Caco-2 (cell line): ENCODE measurements at regions of chr6 and their contacts with region 1.

Region 1: DNA sequence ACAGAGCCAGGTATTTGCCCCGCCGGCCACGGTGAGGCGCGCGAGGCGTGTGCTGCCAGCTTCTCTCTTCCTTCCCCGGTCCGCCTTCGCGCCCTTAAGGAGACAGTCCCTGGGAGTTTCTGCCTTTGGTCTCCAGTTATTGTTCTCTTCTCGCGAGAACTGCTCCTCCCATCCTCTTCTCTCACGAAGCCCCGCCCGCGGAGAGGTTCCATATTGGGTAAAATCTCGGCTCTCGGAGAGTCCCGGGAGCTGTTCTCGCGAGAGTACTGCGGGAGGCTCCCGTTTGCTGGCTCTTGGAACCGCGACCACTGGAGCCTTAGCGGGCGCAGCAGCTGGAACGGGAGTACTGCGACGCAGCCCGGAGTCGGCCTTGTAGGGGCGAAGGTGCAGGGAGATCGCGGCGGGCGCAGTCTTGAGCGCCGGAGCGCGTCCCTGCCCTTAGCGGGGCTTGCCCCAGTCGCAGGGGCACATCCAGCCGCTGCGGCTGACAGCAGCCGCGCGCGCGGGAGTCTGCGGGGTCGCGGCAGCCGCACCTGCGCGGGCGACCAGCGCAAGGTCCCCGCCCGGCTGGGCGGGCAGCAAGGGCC is at the start of gene MAPK14:
- DNase-seq: peak; percentile 99
- H3K4me3 ChIP-seq: peak within 1 kb of the TSS; percentile 78
- H3K4me3 Mint-ChIP-seq: peak within 1 kb of the TSS; percentile 83
- H3K27ac Mint-ChIP-seq: peak within 1 kb of the TSS; percentile 80
- H3K4me1 ChIP-seq: peaks cover 34% of the 10 kb centered on the region
- H3K4me1 Mint-ChIP-seq: peaks cover 18% of the 10 kb centered on the region
- H3K27me3 ChIP-seq: no peaks in the 10 kb centered on the region
- H3K27me3 Mint-ChIP-seq: no peaks in the 10 kb centered on the region
- CTCF ChIP-seq: peak; percentile 82 to 86
- total RNA-seq, gene MAPK14: 69.3 and 72.0 TPM in 2 replicates

Region 2: DNA sequence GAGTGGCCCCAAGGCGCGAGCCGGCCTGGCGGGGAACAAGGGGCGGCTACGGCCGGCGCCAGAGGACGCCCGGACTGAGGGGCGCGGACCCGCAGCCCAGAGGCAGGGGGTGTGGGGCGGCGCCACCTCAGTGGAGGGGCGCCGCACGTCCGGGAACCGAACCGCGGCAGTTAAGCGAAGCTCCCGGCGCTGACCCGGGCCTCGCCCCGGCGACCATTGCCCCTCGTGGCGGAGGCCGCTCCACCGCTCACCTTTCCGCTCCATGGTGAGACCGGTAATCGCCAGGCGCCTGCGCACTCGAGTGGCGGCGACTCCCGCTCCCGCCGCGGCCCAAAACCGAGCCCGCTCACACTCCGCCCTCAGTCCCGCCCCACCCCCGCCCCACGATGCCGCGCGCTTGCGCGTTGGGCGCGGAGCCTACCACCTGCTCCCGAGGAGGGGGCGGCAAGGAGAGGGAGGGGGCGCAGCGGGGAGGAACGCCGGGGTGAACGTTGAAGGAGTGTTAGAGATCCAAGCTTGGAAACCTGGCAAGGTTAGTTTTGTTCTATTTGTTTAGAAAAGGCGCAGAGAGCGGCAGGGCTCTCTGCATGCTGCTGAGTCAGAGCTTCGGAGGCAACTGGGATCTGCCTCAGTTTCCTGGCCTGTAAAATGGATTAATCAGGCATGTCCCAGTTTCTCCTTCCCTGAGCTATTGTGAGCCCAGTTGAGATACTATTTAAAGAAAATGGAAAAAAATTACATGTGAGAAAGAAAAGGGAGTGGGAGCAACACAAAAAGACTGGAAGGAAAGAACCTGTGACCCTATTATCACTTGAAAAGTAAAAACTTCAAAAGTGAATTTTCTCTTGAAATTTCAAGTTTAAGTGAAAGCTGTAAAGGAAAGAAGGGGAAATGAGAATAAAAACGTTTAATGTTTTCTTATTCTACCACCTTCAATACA is 106.5 kb before region 1 on chr6 and contains the start of gene SRPK1:
- CTCF ChIA-PET with region 1: interaction called, 4 read pairs
- POLR2A ChIA-PET with region 1: interaction called, 4 read pairs
- intact Hi-C with region 1: loop called (anchors 5 kb)
- DNase-seq: peak; percentile 94
- H3K4me3 ChIP-seq: peak within 1 kb of the TSS; percentile 69
- H3K4me3 Mint-ChIP-seq: peak within 1 kb of the TSS; percentile 97
- H3K27ac Mint-ChIP-seq: peak within 1 kb of the TSS; percentile 97
- H3K4me1 ChIP-seq: peaks cover 20% of the 10 kb centered on the region
- H3K4me1 Mint-ChIP-seq: peaks cover 34% of the 10 kb centered on the region
- H3K27me3 ChIP-seq: no peaks in the 10 kb centered on the region
- H3K27me3 Mint-ChIP-seq: no peaks in the 10 kb centered on the region
- CTCF ChIP-seq: no peak
- total RNA-seq, gene SRPK1: 114 and 124 TPM in 2 replicates

Region 3: GRCh38 chr6:36015666-36016065 is 11.9 kb before region 1 on chr6:
- CTCF ChIA-PET with region 1: interaction called, 4 read pairs
- POLR2A ChIA-PET with region 1: interaction called, 12 read pairs
- intact Hi-C with region 1: no loop called
- DNase-seq: no peak
- H3K4me3 ChIP-seq: no peak overlapping the region
- H3K4me3 Mint-ChIP-seq: no peak overlapping the region
- H3K27ac Mint-ChIP-seq: no peak overlapping the region
- H3K4me1 ChIP-seq: peaks cover 9% of the 10 kb centered on the region; the same call in 1 of the 2 replicates
- H3K4me1 Mint-ChIP-seq: peaks cover 15% of the 10 kb centered on the region
- H3K27me3 ChIP-seq: no peaks in the 10 kb centered on the region
- H3K27me3 Mint-ChIP-seq: no peaks in the 10 kb centered on the region
- CTCF ChIP-seq: no peak

Region 4: DNA sequence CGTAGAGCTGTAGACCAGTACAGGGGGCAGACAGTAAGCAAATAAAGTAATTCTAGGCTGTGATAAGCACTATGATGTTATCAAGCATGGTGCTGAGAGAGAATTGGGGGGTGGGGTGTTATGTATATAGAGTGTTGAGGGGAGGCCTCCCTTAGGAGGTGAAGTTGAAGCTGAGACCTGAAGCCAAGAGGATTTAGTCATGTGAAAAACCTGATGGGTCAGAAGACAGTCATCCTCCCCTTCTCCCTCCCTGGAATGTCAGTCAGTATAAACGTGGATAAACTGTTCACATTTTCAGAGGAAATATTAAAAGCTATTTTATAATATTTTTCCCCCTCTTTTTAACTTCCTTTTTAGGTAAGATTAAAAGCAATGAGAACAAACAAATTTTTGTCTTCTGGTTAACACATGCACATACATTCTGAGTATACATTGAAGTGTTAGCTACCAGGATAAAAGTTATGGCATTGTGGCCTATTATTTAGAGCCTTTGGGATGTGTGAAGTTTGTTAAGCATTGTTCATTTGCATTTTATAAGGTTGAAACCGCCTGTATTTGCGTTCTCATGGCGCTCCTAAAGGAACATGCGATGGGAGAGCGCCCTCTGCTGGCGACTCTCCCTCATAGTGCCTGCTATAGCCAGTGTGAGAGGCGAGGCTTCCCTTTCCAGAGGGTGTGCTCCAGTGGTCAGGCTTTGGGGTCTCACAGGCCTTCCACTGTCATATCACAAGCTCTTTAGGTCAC is 67.3 kb after region 1 on chr6:
- CTCF ChIA-PET with region 1: interaction called, 28 read pairs
- POLR2A ChIA-PET with region 1: interaction called, 13 read pairs
- intact Hi-C with region 1: loop called (anchors 1 kb)
- DNase-seq: peak; percentile 74 to 83
- H3K4me3 ChIP-seq: no peak overlapping the region
- H3K4me3 Mint-ChIP-seq: peak overlapping the region; percentile 61
- H3K27ac Mint-ChIP-seq: peak overlapping the region; percentile 85
- H3K4me1 ChIP-seq: peaks cover 29% of the 10 kb centered on the region
- H3K4me1 Mint-ChIP-seq: peaks cover 29% of the 10 kb centered on the region
- H3K27me3 ChIP-seq: no peaks in the 10 kb centered on the region
- H3K27me3 Mint-ChIP-seq: no peaks in the 10 kb centered on the region
- CTCF ChIP-seq: peak; percentile 91 to 92

Region 5: DNA sequence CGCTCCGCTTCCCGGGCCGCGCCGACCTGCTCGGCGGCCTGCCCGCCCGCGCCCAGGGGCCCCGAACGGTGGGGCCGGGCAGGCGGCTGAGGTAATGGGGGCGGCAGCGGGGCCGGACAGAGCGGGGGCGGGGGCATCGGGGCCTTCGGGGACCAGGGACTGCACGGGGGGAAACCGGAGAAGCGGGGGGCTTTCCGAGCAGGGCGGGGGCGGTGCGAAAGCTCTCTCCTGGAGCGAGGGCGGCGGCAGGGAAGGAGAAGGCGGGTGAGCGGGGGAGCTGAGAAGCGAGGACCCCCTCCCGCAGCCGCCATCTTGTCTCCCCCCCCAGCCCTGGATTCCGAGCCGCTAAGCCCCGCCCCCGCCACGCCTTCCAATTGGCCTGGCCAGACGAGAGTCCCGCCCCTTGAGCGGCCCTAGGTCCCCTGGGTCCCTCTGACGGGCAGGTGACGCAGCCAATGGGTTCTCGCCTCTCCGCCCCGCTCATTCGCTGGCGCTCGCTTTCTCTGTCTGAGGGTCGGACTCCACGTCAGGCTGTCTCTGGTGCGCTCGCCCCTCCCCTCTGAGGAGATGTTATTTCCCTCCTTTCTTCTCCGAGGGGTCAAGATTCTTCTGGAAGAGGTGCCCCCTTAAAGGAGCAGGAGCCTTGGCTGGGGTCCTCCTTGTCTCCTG is 169.4 kb after region 1 on chr6:
- CTCF ChIA-PET with region 1: interaction called, 6 read pairs
- POLR2A ChIA-PET with region 1: no interaction called
- intact Hi-C with region 1: loop called (anchors 5 kb)
- DNase-seq: peak; percentile 99
- H3K4me3 ChIP-seq: peak overlapping the region; percentile 76
- H3K4me3 Mint-ChIP-seq: peak overlapping the region; percentile 82
- H3K27ac Mint-ChIP-seq: peak overlapping the region; percentile 83
- H3K4me1 ChIP-seq: no peaks in the 10 kb centered on the region
- H3K4me1 Mint-ChIP-seq: peaks cover 6% of the 10 kb centered on the region
- H3K27me3 ChIP-seq: no peaks in the 10 kb centered on the region
- H3K27me3 Mint-ChIP-seq: no peaks in the 10 kb centered on the region
- CTCF ChIP-seq: no peak